SK-N-SH (cell line): ENCODE measurements at regions of chr7 and their contacts with region 1.

Region 1: GRCh38 chr7:151759591-151760042 is 117.3 kb downstream of the PRKAG2 start:
- DNase-seq: peak; percentile 92
- H3K4me3 ChIP-seq: no peak overlapping the region
- H3K27ac ChIP-seq: no peak overlapping the region
- H3K4me1 ChIP-seq: peaks cover 20 to 21% of the 10 kb centered on the region in 2 experiments; a peak in 3 of 4 replicates
- H3K27me3 ChIP-seq: peaks cover 13% of the 10 kb centered on the region; the same call in 1 of the 2 replicates
- CTCF ChIP-seq: peak; percentile 99
- EP300 ChIP-seq: no peak
- RAD21 ChIP-seq: peak; percentile 99

Region 2: GRCh38 chr7:151368136-151368571 is 391.5 kb before region 1 on chr7:
- CTCF ChIA-PET with region 1: interaction called, 50 read pairs
- POLR2A ChIA-PET with region 1: no interaction called
- DNase-seq: peak; percentile 91
- H3K4me3 ChIP-seq: no peak overlapping the region
- H3K27ac ChIP-seq: no peak overlapping the region
- H3K4me1 ChIP-seq: peaks cover 0 to 13% of the 10 kb centered on the region in 2 experiments; a peak in 2 of 4 replicates
- H3K27me3 ChIP-seq: no peaks in the 10 kb centered on the region
- CTCF ChIP-seq: peak; percentile 99
- EP300 ChIP-seq: no peak
- RAD21 ChIP-seq: peak; percentile 90

Region 3: DNA sequence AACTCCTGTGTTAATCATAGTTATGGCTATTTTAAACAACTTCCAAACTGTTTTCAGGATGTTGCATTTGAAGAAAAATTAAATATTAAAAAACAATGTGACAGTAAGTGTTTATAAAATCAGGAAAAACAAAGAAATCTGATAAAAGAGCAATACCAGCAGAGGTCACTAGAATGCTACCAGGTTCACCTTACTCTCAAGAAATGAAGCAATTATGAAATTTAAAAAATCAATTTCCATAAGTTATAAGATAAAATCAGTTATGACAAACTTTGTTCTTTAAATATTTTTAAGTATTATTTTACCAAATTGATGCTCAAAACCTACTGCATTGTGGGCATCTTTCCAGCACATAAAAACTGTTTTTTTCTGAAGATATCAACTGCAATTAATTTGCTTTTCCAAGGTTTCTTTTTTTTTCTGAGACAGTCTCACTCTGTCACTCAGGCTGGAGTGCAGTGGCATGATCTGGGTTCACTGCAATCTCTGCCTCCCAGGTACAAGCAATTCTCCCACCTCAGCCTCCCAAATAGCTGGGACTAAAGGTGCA is 189.2 kb before region 1 on chr7:
- CTCF ChIA-PET with region 1: interaction called, 108 read pairs
- POLR2A ChIA-PET with region 1: no interaction called
- DNase-seq: no peak
- H3K4me3 ChIP-seq: no peak overlapping the region
- H3K27ac ChIP-seq: no peak overlapping the region
- H3K4me1 ChIP-seq: peaks cover 2 to 4% of the 10 kb centered on the region in 2 experiments
- H3K27me3 ChIP-seq: no peaks in the 10 kb centered on the region
- CTCF ChIP-seq: peak; percentile 99
- EP300 ChIP-seq: no peak
- RAD21 ChIP-seq: peak; percentile 84

Region 4: GRCh38 chr7:151637781-151638261 is 121.8 kb before region 1 on chr7:
- CTCF ChIA-PET with region 1: interaction called, 203 read pairs
- POLR2A ChIA-PET with region 1: no interaction called
- DNase-seq: no peak
- H3K4me3 ChIP-seq: no peak overlapping the region
- H3K27ac ChIP-seq: no peak overlapping the region
- H3K4me1 ChIP-seq: no peaks in the 10 kb centered on the region; a peak in 1 of 4 replicates
- H3K27me3 ChIP-seq: no peaks in the 10 kb centered on the region
- CTCF ChIP-seq: no peak
- EP300 ChIP-seq: no peak
- RAD21 ChIP-seq: no peak

Region 5: DNA sequence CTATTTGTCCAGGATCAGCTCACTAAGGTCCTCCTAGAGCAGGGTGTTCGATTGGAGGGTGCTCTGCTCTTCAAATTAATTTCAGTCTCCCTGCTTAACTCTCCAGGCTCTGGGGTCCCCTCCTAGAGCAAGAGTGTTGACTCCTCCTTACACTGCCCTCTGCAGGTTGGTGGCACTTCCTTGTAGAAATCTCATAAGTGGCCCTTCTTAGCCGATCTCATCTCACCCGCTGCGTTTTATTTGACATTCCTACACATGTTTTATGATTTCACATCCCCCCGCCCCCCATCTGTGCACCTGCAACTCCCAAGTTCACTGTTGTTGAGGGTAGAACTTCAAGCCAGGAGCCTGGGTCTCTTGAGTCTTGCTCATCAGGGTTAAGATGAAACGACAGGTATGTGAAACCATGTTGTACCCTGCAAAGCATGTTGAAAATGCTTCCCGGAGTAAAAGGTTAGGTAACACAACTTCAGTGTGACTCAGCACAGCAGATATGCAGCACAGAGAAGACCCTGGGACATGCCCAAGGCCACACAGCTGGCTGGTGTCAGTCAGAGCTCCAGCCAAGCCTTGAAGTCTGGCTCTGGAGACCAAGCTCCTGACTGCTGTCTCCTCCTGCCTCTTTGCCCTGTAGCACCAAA is 53.9 kb before region 1 on chr7:
- CTCF ChIA-PET with region 1: interaction called, 36 read pairs
- POLR2A ChIA-PET with region 1: no interaction called
- DNase-seq: peak; percentile 85
- H3K4me3 ChIP-seq: peak overlapping the region in 1 of 2 experiments; percentile 31; a peak in 1 of 4 replicates
- H3K27ac ChIP-seq: peak overlapping the region in 1 of 2 experiments; percentile 91; a peak in 2 of 4 replicates
- H3K4me1 ChIP-seq: peaks cover 0 to 26% of the 10 kb centered on the region in 2 experiments; a peak in 2 of 4 replicates
- H3K27me3 ChIP-seq: no peaks in the 10 kb centered on the region
- CTCF ChIP-seq: peak; percentile 77
- EP300 ChIP-seq: no peak
- RAD21 ChIP-seq: peak; percentile 65

Region 6: GRCh38 chr7:151782598-151783448 is 23.2 kb after region 1 on chr7:
- CTCF ChIA-PET with region 1: interaction called, 333 read pairs
- POLR2A ChIA-PET with region 1: interaction called, 3 read pairs
- DNase-seq: peak; percentile 98
- H3K4me3 ChIP-seq: peak overlapping the region; percentile 28 to 59
- H3K27ac ChIP-seq: no peak overlapping the region
- H3K4me1 ChIP-seq: peaks cover 0 to 7% of the 10 kb centered on the region in 2 experiments; a peak in 1 of 4 replicates
- H3K27me3 ChIP-seq: peaks cover 15% of the 10 kb centered on the region; the same call in 1 of the 2 replicates
- CTCF ChIP-seq: peak; percentile 98
- EP300 ChIP-seq: no peak; a peak in 1 of 4 replicates
- RAD21 ChIP-seq: peak; percentile 75

Region 7: GRCh38 chr7:151830116-151830830 is 70.7 kb after region 1 on chr7:
- CTCF ChIA-PET with region 1: no interaction called
- POLR2A ChIA-PET with region 1: no interaction called
- DNase-seq: no peak
- H3K4me3 ChIP-seq: no peak overlapping the region
- H3K27ac ChIP-seq: no peak overlapping the region
- H3K4me1 ChIP-seq: peaks cover 0 to 4% of the 10 kb centered on the region in 2 experiments; a peak in 1 of 4 replicates
- H3K27me3 ChIP-seq: peaks cover 60% of the 10 kb centered on the region
- CTCF ChIP-seq: no peak
- EP300 ChIP-seq: no peak
- RAD21 ChIP-seq: no peak